Dendritic cell treated with granulocyte-macrophage colony-stimulating factor and Interleukin-4, amounts not matched to agents 40 ng/mL and 50 ng/mL, for 4 days (primary cell): ENCODE measurements at regions of chr19 and their contacts with region 1.

Region 1: GRCh38 chr19:4471403-4472173 is 509 bp upstream of the HDGFL2 start:
- H3K4me3 Mint-ChIP-seq: no peak overlapping the region
- H3K27ac Mint-ChIP-seq: no peak overlapping the region
- H3K4me1 Mint-ChIP-seq: peaks cover 33% of the 10 kb centered on the region
- H3K27me3 Mint-ChIP-seq: no peaks in the 10 kb centered on the region

Region 2: GRCh38 chr19:4246767-4247593 is 224.6 kb before region 1 on chr19 and contains the start of gene YJU2:
- intact Hi-C with region 1: loop called (anchors 5 kb)
- H3K4me3 Mint-ChIP-seq: peak within 1 kb of the TSS; percentile 92
- H3K27ac Mint-ChIP-seq: peak within 1 kb of the TSS; percentile 99
- H3K4me1 Mint-ChIP-seq: peaks cover 23% of the 10 kb centered on the region
- H3K27me3 Mint-ChIP-seq: no peaks in the 10 kb centered on the region

Region 3: GRCh38 chr19:4400135-4400936 is 71.3 kb before region 1 on chr19 and contains the start of gene SH3GL1:
- intact Hi-C with region 1: loop called (anchors 5 kb)
- H3K4me3 Mint-ChIP-seq: peak within 1 kb of the TSS; percentile 96
- H3K27ac Mint-ChIP-seq: peak within 1 kb of the TSS; percentile 93
- H3K4me1 Mint-ChIP-seq: peaks cover 63% of the 10 kb centered on the region
- H3K27me3 Mint-ChIP-seq: no peaks in the 10 kb centered on the region

Region 4: GRCh38 chr19:4457654-4458395 is 13.8 kb before region 1 on chr19 and contains the start of gene UBXN6:
- intact Hi-C with region 1: loop called (anchors 1 kb)
- H3K4me3 Mint-ChIP-seq: peak within 1 kb of the TSS; percentile 89
- H3K27ac Mint-ChIP-seq: peak within 1 kb of the TSS; percentile 87
- H3K4me1 Mint-ChIP-seq: peaks cover 40% of the 10 kb centered on the region
- H3K27me3 Mint-ChIP-seq: no peaks in the 10 kb centered on the region

Region 5: DNA sequence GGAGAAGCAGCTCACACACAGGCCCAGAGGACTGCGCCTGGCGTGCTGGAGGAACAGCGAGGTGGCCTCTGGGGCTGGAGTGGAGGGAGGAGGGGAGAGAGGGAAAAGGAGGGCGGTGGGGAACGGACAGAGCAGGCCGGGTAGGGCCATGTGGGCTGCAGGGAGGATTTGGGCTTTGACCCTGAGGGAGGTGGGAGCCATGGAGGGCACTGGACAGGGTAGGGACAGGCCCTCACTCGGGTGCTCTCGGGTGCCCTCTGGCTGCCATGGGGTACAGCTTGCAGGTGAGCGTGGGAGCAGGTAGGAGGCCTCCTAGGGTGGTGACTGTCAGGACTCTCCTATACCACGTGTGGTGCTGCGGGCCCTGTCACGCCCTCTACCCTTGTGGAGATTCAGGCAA is 23.9 kb after region 1 on chr19:
- intact Hi-C with region 1: no loop called
- H3K4me3 Mint-ChIP-seq: no peak overlapping the region
- H3K27ac Mint-ChIP-seq: no peak overlapping the region
- H3K4me1 Mint-ChIP-seq: no peaks in the 10 kb centered on the region
- H3K27me3 Mint-ChIP-seq: no peaks in the 10 kb centered on the region